Naive thymus-derived CD4-positive, alpha-beta T cell (primary cell): ENCODE measurements at regions of chr9 and their contacts with region 1.

Region 1: GRCh38 chr9:98255578-98256296 is at the start of gene TBC1D2:
- DNase-seq: peak; percentile 96 to 98 (median 98)
- ATAC-seq: peak; percentile 96
- H3K4me3 ChIP-seq: peak within 1 kb of the TSS; percentile 80
- H3K4me3 Mint-ChIP-seq: peak within 1 kb of the TSS; percentile 96 to 99 (median 97)
- H3K27ac ChIP-seq: peak within 1 kb of the TSS; percentile 78
- H3K27ac Mint-ChIP-seq: peak within 1 kb of the TSS; percentile 90 to 99 (median 97)
- H3K4me1 ChIP-seq: peaks cover 11 to 23% of the 10 kb centered on the region in 2 donors
- H3K4me1 Mint-ChIP-seq: peaks cover 24 to 45% (median 32%) of the 10 kb centered on the region in 7 donors
- H3K27me3 ChIP-seq: no peaks in the 10 kb centered on the region
- H3K27me3 Mint-ChIP-seq: peaks cover 0 to 13% (median 0%) of the 10 kb centered on the region in 5 donors
- total RNA-seq, gene TBC1D2: 4.9 to 16.6 (median 8.8) TPM

Region 2: GRCh38 chr9:96654443-96655197 is 1601.1 kb before region 1 on chr9:
- CTCF ChIA-PET with region 1: no interaction called
- POLR2A ChIA-PET with region 1: no interaction called
- intact Hi-C with region 1: loop called in 1 of 2 experiments (anchors 10 kb)
- DNase-seq: peak; percentile 65 to 94 (median 86)
- ATAC-seq: peak; percentile 89
- H3K4me3 ChIP-seq: peak overlapping the region; percentile 62
- H3K4me3 Mint-ChIP-seq: peak overlapping the region; percentile 88 to 98 (median 93)
- H3K27ac ChIP-seq: peak overlapping the region; percentile 87
- H3K27ac Mint-ChIP-seq: peak overlapping the region; percentile 88 to 98 (median 97)
- H3K4me1 ChIP-seq: peaks cover 0 to 14% of the 10 kb centered on the region in 2 donors
- H3K4me1 Mint-ChIP-seq: peaks cover 0 to 33% (median 21%) of the 10 kb centered on the region in 7 donors
- H3K27me3 ChIP-seq: no peaks in the 10 kb centered on the region
- H3K27me3 Mint-ChIP-seq: peaks cover 0 to 23% (median 0%) of the 10 kb centered on the region in 5 donors

Region 3: DNA sequence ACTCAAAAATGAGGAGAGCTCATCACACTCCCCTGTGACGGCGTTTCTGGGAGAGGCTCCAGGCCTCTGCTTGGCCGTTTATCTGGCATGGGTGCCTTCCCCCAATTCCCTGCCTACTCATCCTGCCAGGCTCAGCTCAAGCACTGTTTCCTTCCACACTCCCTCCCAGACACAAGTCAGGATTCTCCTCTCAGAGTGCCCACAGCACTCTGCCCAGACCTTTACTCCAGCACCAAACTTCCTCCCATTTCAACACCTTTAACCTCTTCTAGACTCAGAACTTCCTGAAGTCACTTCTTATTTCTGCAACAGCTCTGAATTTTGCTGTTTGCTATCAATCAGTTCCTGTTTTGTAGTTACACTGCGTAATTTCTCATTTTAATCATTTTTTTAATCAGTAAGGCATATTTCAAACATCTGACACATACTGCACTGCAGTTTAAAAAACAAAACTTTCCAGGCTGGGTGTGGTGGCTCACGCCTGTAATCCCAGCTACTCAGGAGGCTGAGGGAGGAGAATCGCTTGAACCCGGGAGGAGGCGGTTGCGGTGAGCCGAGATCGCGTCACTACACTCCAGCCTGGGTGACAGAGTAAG is 349.4 kb before region 1 on chr9:
- CTCF ChIA-PET with region 1: no interaction called
- POLR2A ChIA-PET with region 1: interaction called, 20 read pairs
- intact Hi-C with region 1: loop called in 1 of 2 experiments (anchors 5 kb)
- DNase-seq: peak in 7 of 9 donors; percentile 68 to 89 (median 79)
- ATAC-seq: peak; percentile 58
- H3K4me3 ChIP-seq: peak overlapping the region; percentile 51
- H3K4me3 Mint-ChIP-seq: peak overlapping the region; percentile 80 to 98 (median 92)
- H3K27ac ChIP-seq: peak overlapping the region; percentile 95
- H3K27ac Mint-ChIP-seq: peak overlapping the region; percentile 92 to 100 (median 98)
- H3K4me1 ChIP-seq: peaks cover 74 to 79% of the 10 kb centered on the region in 2 donors
- H3K4me1 Mint-ChIP-seq: peaks cover 61 to 94% (median 87%) of the 10 kb centered on the region in 7 donors
- H3K27me3 ChIP-seq: no peaks in the 10 kb centered on the region
- H3K27me3 Mint-ChIP-seq: no peaks in the 10 kb centered on the region

Region 4: DNA sequence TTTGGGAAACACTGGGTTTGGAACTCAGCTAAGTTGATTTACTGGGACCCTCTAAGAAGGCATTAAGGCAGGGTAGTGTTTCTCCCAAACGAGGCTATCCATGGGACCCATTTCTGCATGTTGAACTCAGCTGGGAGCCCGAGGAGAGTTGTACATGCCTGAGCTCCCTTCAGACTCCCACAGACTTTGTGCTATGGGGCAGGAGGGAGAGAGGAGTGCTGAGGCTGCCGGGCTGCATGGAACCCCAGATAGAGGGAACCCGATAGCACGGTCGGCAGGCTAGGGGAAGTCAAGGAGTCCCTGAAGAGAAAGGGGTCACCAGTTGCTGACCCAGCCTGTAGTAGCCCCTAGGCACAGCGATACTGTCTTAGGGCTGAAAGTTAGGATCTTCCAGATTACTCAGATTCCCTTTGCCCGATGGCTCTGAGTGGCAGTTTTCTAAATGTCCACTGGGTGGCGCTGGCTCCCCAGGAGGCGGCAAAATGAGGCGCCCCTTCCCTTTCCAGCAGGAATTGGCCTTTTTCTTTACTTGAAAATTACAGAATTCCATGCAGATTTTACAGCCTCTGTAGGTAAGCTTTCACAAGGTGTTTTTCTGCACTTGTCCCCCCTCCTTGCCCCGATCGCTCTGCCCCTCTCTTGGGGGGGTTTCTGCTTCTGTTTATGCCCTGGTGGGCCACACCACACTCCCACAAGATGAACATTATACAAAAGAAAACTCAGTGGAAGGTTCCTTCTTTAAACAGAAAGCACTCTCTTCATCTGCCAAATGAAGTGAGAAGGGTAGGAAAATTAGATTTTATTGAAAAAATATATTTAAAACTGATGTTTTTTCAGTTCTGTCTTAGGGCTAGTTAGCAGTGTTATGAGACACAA is 181.4 kb before region 1 on chr9:
- CTCF ChIA-PET with region 1: interaction called, 15 read pairs
- POLR2A ChIA-PET with region 1: interaction called, 24 read pairs
- intact Hi-C with region 1: loop called in 1 of 2 experiments (anchors 1 kb)
- DNase-seq: peak; percentile 46 to 78 (median 63)
- ATAC-seq: peak; percentile 47
- H3K4me3 ChIP-seq: no peak overlapping the region
- H3K4me3 Mint-ChIP-seq: peak overlapping the region; percentile 26 to 79 (median 64)
- H3K27ac ChIP-seq: peak overlapping the region; percentile 81
- H3K27ac Mint-ChIP-seq: peak overlapping the region; percentile 83 to 98 (median 94)
- H3K4me1 ChIP-seq: peaks cover 27 to 28% of the 10 kb centered on the region in 2 donors
- H3K4me1 Mint-ChIP-seq: peaks cover 0 to 55% (median 46%) of the 10 kb centered on the region in 7 donors
- H3K27me3 ChIP-seq: no peaks in the 10 kb centered on the region
- H3K27me3 Mint-ChIP-seq: no peaks in the 10 kb centered on the region

Region 5: GRCh38 chr9:98118640-98119601 is 136.8 kb before region 1 on chr9 and contains the start of gene TRIM14:
- CTCF ChIA-PET with region 1: interaction called, 7 read pairs
- POLR2A ChIA-PET with region 1: interaction called, 70 read pairs
- intact Hi-C with region 1: loop called (anchors 1 kb)
- DNase-seq: peak; percentile 23 to 79 (median 39)
- ATAC-seq: peak; percentile 64
- H3K4me3 ChIP-seq: peak within 1 kb of the TSS; percentile 78
- H3K4me3 Mint-ChIP-seq: peak within 1 kb of the TSS; percentile 81 to 100 (median 93)
- H3K27ac ChIP-seq: peak within 1 kb of the TSS; percentile 93
- H3K27ac Mint-ChIP-seq: peak within 1 kb of the TSS; percentile 95 to 100 (median 96)
- H3K4me1 ChIP-seq: peaks cover 26 to 39% of the 10 kb centered on the region in 2 donors
- H3K4me1 Mint-ChIP-seq: peaks cover 35 to 70% (median 58%) of the 10 kb centered on the region in 7 donors
- H3K27me3 ChIP-seq: no peaks in the 10 kb centered on the region
- H3K27me3 Mint-ChIP-seq: no peaks in the 10 kb centered on the region
- total RNA-seq, gene TRIM14: 54.1 to 114 (median 79.7) TPM

Region 6: GRCh38 chr9:98796364-98797101 is 540.8 kb after region 1 on chr9 and contains the start of gene ANKS6:
- CTCF ChIA-PET with region 1: interaction called, 3 read pairs
- POLR2A ChIA-PET with region 1: interaction called, 4 read pairs
- intact Hi-C with region 1: loop called (anchors 2 to 10 kb)
- DNase-seq: peak; percentile 67 to 95 (median 84)
- ATAC-seq: peak; percentile 98
- H3K4me3 ChIP-seq: peak within 1 kb of the TSS; percentile 87
- H3K4me3 Mint-ChIP-seq: peak within 1 kb of the TSS; percentile 87 to 94 (median 90)
- H3K27ac ChIP-seq: peak within 1 kb of the TSS; percentile 74
- H3K27ac Mint-ChIP-seq: peak within 1 kb of the TSS; percentile 63 to 90 (median 87)
- H3K4me1 ChIP-seq: peaks cover 6 to 12% of the 10 kb centered on the region in 2 donors
- H3K4me1 Mint-ChIP-seq: peaks cover 21 to 37% (median 32%) of the 10 kb centered on the region in 7 donors
- H3K27me3 ChIP-seq: no peaks in the 10 kb centered on the region
- H3K27me3 Mint-ChIP-seq: peaks cover 0 to 23% (median 0%) of the 10 kb centered on the region in 5 donors
- total RNA-seq, gene ANKS6: 8.1 to 18.4 (median 13.5) TPM